Activated CD4-positive, alpha-beta memory T cell treated with anti-CD3 and anti-CD28 coated beads for 36 hours (primary cell): ENCODE measurements at regions of chr3 and their contacts with region 1.

Region 1: DNA sequence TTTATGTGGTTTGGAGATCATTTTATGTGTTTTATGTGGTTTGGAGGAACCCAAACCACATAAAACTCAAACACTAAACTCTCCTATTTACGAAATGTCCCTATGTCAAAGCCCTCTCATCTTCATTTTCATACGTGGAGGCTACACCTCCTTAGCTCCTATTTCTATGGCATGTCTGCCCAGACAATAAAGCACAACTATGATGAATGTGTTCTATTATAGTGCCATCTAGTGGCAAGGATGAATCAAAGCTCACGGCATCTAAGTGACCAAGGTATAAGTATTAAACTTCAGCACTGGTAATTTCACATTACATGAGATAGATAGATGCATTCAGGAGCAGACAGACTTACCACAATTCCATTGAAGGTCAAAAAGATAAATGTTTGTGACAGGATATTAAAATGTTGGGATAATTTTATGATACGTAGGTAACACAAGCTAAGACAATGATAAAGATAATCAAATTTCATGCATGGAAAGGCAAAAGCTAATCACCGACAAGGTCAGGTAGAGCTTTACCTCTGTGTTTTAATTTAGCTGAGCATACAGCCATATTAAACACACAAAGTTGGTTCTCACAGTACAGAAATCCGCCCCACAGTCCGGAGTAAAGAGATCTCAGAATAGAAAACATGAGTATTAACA is 130.6 kb upstream of the FHIT start:
- DNase-seq: no peak
- H3K4me3 Mint-ChIP-seq: no peak overlapping the region
- H3K27ac Mint-ChIP-seq: no peak overlapping the region
- H3K4me1 Mint-ChIP-seq: peaks cover 3% of the 10 kb centered on the region
- H3K27me3 Mint-ChIP-seq: peaks cover 19% of the 10 kb centered on the region

Region 2: DNA sequence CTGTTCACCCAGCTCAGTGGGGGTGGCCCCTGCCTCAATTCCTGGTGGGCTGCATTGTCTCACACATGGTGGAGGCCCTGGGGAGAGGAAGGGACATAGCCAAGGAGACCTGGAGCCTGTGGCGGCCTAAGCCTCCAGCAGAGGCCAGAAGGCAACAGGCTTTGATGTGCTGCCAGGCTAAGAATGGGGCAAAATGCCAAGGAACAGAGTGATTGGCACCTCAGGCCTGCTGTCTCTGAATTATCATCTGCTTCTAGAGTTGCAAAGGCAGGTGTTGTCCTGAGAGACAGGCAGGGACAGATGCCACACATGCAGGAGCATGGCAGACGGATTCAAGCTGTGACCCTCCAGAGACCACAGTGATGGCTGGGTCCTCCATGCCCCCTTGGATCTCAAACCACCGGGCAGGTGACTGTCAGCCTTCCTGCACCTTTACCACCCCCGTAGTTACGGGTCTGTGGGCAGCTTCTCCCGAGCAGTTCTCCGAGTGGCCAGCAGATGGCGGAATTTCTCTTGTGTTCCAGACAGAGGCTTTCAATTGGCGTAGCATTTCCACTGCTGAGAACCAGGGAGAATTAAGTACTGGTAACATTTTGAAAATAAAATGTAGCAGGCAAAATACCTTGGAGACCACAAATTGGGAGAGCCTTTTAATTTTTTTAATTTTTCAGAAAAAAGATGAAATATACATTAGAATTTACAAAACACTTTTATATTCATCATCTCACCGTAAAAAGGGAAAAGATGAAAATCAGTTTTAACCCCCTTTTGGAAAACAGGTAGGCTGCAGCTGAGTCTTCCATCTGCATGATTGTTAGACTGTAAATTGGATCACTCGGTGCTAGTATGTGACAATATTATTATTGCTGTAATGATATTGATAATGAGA is 1806.5 kb before region 1 on chr3:
- CTCF ChIA-PET with region 1: interaction called, 11 read pairs
- POLR2A ChIA-PET with region 1: no interaction called
- intact Hi-C with region 1: loop called (anchors 1 kb)
- DNase-seq: peak; percentile 90
- H3K4me3 Mint-ChIP-seq: no peak overlapping the region
- H3K27ac Mint-ChIP-seq: no peak overlapping the region
- H3K4me1 Mint-ChIP-seq: peaks cover 4% of the 10 kb centered on the region
- H3K27me3 Mint-ChIP-seq: no peaks in the 10 kb centered on the region

Region 3: DNA sequence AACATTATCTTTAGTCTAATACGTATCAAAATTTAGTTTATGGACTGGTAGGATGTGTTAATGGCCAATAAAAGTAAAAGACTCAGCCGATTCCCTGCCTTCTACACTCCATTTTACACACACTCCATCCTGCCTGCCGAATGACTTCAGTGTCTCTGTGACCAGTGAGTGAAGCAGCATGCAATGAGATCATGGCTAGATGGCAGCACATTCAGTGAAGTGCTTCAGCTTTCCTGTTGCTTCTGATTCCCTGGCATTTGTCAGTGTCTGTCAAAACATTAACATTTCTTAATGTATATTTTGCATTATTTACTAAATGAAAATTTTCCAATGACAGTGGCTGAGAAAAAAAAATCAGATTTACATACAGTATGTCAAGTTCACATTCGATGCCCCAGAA is 542.6 kb before region 1 on chr3:
- CTCF ChIA-PET with region 1: no interaction called
- POLR2A ChIA-PET with region 1: no interaction called
- intact Hi-C with region 1: no loop called
- DNase-seq: no peak
- H3K4me3 Mint-ChIP-seq: no peak overlapping the region
- H3K27ac Mint-ChIP-seq: no peak overlapping the region
- H3K4me1 Mint-ChIP-seq: no peaks in the 10 kb centered on the region
- H3K27me3 Mint-ChIP-seq: no peaks in the 10 kb centered on the region

Region 4: GRCh38 chr3:61371123-61371522 is 10.7 kb before region 1 on chr3:
- CTCF ChIA-PET with region 1: interaction called, 13 read pairs
- POLR2A ChIA-PET with region 1: no interaction called
- intact Hi-C with region 1: no loop called
- DNase-seq: peak; percentile 24
- H3K4me3 Mint-ChIP-seq: no peak overlapping the region
- H3K27ac Mint-ChIP-seq: no peak overlapping the region
- H3K4me1 Mint-ChIP-seq: no peaks in the 10 kb centered on the region
- H3K27me3 Mint-ChIP-seq: peaks cover 3% of the 10 kb centered on the region

Region 5: DNA sequence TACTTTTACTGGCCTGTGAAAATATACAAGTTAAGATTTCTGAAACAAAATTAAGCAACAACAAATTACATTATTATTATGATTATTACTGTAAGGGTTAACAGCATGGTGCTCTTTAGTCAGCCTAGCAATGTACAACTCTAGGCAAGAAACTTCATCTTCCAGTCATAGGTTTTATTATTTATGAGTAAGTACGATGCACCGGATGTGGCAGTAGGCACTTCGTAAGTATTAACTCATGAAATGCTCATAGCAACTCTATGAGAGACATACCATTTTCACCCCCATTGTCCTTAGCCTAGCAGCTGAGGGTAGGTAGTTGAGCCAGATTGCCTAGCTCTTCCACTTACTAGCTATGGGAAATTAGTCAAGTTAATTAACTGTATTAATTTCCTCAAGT is 111.5 kb after region 1 on chr3:
- CTCF ChIA-PET with region 1: no interaction called
- POLR2A ChIA-PET with region 1: no interaction called
- intact Hi-C with region 1: no loop called
- DNase-seq: no peak
- H3K4me3 Mint-ChIP-seq: no peak overlapping the region
- H3K27ac Mint-ChIP-seq: no peak overlapping the region
- H3K4me1 Mint-ChIP-seq: no peaks in the 10 kb centered on the region
- H3K27me3 Mint-ChIP-seq: no peaks in the 10 kb centered on the region

Region 6: DNA sequence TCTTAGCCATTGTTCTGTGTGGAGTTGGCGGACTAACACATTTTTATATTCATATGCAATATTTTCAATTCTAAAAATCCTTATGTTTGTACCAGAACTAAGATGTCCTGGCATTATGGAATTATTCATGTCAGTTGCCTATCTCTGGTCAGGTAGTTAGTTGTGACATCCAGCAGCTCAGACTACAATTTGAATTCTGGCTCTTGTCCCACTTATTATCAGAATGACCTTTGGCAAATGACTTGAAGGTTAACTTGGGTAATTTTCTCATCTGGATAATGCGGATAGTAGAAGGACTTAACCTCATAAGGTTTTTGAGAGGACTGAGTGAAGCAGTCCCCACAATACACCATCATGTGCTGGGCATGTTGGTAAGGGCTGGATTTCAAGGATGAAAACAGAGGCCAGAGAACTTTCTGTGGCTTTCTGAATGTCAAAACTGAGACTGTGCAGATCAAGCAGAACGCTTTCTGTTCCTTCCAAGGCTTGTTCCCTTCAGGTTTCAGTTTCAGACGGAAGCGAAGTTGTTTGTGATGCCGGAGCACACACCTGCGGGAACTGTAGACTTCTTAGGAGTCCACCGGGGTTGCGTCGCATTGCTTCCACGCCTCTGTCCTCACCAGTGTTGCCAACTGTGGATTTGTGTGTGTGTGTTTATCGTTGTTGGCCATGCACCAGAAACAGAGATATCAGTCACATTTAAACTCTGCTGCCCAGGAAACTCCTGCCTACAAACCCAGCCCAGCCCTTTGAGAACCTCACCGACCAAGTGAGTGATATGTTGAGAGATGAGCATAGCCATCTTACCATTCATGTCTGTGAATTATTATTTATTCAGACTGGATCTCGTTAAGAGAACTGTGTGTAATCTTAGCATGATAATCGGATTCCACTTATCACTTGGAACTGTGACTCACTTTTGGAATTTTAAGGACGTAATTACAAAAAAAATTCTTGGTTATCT is 255.5 kb after region 1 on chr3:
- CTCF ChIA-PET with region 1: no interaction called
- POLR2A ChIA-PET with region 1: no interaction called
- intact Hi-C with region 1: no loop called
- DNase-seq: no peak
- H3K4me3 Mint-ChIP-seq: no peak overlapping the region
- H3K27ac Mint-ChIP-seq: no peak overlapping the region
- H3K4me1 Mint-ChIP-seq: no peaks in the 10 kb centered on the region
- H3K27me3 Mint-ChIP-seq: no peaks in the 10 kb centered on the region

Region 7: GRCh38 chr3:62188681-62189383 is 807.0 kb after region 1 on chr3:
- CTCF ChIA-PET with region 1: interaction called, 7 read pairs
- POLR2A ChIA-PET with region 1: no interaction called
- intact Hi-C with region 1: loop called (anchors 10 kb)
- DNase-seq: peak; percentile 73
- H3K4me3 Mint-ChIP-seq: no peak overlapping the region
- H3K27ac Mint-ChIP-seq: no peak overlapping the region
- H3K4me1 Mint-ChIP-seq: peaks cover 4% of the 10 kb centered on the region
- H3K27me3 Mint-ChIP-seq: peaks cover 5% of the 10 kb centered on the region